ENCODE measurements at regions of chr17 and their contacts with region 1.

Region 1: DNA sequence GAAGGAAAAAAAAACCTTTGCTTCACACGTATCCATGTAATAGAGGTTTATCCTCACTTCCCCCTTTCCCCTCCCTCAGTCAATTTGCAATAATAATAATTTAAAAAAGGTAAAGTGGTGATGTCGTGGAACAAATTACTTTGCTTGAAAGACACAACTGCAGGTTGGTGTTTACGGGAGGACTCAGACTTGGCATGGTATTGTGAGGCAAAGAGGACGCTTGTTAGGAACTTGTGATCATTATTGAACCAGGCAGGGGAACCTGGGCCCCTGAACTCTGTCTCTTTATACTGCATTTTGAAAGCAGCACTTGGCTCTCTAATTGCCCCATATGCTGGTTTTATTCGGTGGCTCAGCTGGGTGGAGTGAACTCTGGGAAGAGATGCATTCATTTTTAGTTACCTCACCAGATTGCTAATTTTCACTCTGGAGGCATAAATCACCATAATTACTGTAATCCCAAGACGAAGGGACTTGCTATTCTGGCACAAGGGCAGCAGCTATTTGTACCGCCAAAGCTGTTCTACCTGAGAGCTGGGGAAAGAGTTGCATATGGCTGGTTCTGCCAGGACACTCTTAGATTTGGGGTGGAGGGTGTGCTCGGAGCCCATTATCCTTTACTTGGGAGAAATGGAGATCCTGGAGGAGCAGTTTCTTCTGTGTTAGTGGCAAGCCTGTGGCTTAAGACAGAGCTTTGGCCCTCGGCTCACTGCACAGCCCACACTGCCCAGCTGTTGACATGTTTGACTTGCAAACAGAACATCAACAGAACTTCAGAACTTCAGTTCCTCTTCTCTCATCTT is 5.7 kb upstream of the DHX8 start:
- DNase-seq: no peak
- CTCF ChIP-seq: no peak

Region 2: GRCh38 chr17:43400943-43401692 is 76.9 kb before region 1 on chr17:
- in situ Hi-C with region 1: loop called (anchors 5 kb)
- DNase-seq: no peak
- CTCF ChIP-seq: no peak

Region 3: GRCh38 chr17:43634591-43635125 is 156.6 kb after region 1 on chr17:
- in situ Hi-C with region 1: no loop called
- DNase-seq: no peak
- CTCF ChIP-seq: no peak